ENCODE measurements at regions of chr11 and their contacts with region 1.

Region 1: DNA sequence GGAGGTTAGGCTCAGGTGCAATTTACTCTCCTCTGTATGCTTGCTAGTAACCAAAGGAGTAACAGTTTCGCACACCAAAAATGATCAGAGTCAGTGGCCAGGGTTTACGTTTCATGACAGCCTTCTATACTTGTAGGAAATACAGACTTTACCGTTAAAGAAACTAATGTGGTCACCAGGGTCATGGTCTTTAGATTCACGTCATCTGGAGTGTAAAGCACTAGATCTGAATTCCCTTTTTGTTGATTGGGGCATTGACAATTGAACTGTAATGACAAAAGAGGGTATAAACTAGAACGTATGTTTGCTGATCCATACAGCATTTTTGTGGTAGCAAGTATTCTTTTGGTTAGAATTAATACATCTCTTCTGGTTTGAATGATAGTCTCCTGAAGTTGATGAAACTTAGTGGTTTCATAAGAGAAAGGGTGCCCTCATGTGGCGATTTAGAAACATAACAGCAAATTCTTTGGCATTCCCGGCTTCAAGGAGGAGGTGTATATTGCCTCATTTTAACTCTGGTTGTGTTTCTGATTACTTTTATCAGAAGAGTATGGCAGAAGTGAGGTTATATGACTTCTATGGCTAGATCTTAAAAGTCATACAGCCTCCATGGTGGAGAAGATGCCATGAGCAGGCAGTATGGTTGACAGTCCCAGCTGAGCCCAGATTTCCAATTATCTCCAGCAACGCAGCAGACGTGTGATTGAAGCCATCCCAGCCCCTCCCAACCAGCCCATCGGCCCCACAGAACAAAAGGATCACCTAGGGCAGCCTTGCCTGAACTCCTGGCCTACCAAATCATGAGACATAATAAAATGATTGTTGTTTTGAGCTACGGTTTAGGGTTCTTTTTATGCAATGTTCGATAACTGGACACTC is 35.1 kb downstream of the MMP7 start:
- DNase-seq: no peak
- ATAC-seq: peak; percentile 82 to 86

Region 2: GRCh38 chr11:102287964-102288724 is 207.3 kb before region 1 on chr11:
- intact Hi-C with region 1: loop called (anchors 2 to 10 kb)
- DNase-seq: peak; percentile 41
- ATAC-seq: peak; percentile 84 to 90

Region 3: GRCh38 chr11:102341844-102342318 is 153.5 kb before region 1 on chr11:
- intact Hi-C with region 1: loop called (anchors 2 to 10 kb)
- DNase-seq: peak; percentile 71
- ATAC-seq: peak in 1 of 2 donors; percentile 63

Region 4: DNA sequence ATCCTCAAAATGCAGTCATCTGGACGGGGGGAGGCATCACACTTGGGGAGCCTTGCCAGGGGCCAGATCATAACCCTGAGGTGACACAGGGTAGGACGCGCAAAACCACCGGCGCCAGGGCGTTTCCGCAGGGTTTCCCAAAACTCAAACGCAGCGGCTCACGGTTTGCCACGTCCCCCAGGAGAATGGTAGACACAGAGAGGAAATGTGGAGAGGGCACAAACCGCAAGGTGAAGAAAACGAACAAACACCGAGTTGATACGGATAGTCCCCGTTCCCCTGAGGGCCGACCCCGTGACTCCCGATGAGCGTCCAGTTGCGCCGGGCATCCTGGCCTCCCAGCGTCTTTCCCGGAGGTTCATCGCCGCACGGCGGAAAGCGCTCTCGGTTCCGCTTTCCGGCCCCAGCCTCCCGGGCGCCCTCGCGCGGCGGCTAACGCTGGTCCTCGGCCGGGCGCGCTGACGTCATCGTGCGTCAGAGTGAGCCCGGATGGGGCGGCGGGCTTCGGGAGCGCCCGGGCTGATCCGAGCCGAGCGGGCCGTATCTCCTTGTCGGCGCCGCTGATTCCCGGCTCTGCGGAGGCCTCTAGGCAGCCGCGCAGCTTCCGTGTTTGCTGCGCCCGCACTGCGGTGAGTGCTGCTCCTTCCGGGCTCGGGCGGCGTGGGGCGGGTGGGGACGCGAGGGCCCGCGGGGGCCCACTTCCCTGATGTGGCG is 148.5 kb before region 1 on chr11 and contains the start of gene BIRC2:
- intact Hi-C with region 1: loop called in 1 of 2 experiments (anchors 10 kb)
- DNase-seq: peak; percentile 97
- ATAC-seq: peak; percentile 98
- total RNA-seq, gene BIRC2: 30.4 to 34.2 TPM

Region 5: GRCh38 chr11:102390667-102391465 is 104.5 kb before region 1 on chr11:
- intact Hi-C with region 1: loop called in 1 of 2 experiments (anchors 5 kb)
- DNase-seq: peak; percentile 63
- ATAC-seq: peak; percentile 83 to 86